Heart right ventricle (tissue), 16 donors: ENCODE measurements at regions of chr5 and their contacts with region 1.

Region 1: GRCh38 chr5:170791325-170791954 is 7.9 kb downstream of the GABRP start:
- DNase-seq: peak; percentile 49 to 76
- ATAC-seq: peak; percentile 74 to 88 (median 83)
- H3K4me3 ChIP-seq: no peak overlapping the region
- H3K27ac ChIP-seq: peak overlapping the region in 5 of 10 donors; percentile 3 to 76 (median 30)
- H3K4me1 ChIP-seq: peaks cover 2 to 46% (median 27%) of the 10 kb centered on the region in 9 donors
- H3K27me3 ChIP-seq: no peaks in the 10 kb centered on the region
- CTCF ChIP-seq: peak; percentile 57 to 82 (median 66)

Region 2: DNA sequence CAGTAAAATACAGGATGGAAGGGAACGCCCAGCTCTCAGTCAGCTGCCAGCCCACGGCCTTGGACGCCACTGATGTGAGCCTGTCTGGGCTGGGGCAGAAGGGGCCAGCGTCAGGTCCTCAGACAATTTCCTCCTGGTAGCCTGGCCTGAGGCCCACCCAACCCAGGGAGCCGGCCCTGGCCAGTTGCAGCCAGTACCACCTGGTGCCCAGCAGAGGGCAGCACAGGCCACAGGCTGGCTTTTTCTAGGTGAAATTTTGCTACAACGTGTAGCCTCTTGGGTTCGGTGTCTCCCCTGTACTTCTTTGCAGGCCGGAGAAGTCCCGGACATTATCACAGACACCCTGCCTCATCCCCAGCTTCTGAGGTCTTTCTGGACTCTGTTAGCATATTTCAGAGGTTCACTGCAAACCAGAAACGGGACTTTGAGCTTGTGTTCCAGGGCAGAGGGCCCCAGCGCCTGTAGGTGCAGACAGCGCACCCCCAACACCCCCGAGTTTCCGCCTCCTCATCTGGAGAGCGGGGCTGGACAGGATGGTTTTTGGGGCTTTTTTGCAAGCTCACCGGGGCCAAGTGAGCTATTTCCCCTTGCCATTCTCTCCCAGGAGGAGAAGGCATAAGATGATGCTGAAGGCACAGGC is 356.4 kb before region 1 on chr5:
- intact Hi-C with region 1: loop called in 1 of 10 experiments (anchors 10 kb)
- DNase-seq: peak; percentile 43 to 70
- ATAC-seq: peak; percentile 77 to 88 (median 87)
- H3K4me3 ChIP-seq: no peak overlapping the region
- H3K27ac ChIP-seq: no peak overlapping the region
- H3K4me1 ChIP-seq: no peaks in the 10 kb centered on the region
- H3K27me3 ChIP-seq: peaks cover 0 to 10% (median 0%) of the 10 kb centered on the region in 7 donors
- CTCF ChIP-seq: peak; percentile 95 to 99 (median 98)

Region 3: GRCh38 chr5:170638454-170639220 is 152.8 kb before region 1 on chr5:
- intact Hi-C with region 1: loop called (anchors 2 to 10 kb)
- DNase-seq: peak; percentile 61 to 69
- ATAC-seq: peak; percentile 46 to 76 (median 64)
- H3K4me3 ChIP-seq: no peak overlapping the region
- H3K27ac ChIP-seq: no peak overlapping the region
- H3K4me1 ChIP-seq: peaks cover 0 to 26% (median 11%) of the 10 kb centered on the region in 9 donors
- H3K27me3 ChIP-seq: no peaks in the 10 kb centered on the region
- CTCF ChIP-seq: peak; percentile 71 to 94 (median 87)

Region 4: DNA sequence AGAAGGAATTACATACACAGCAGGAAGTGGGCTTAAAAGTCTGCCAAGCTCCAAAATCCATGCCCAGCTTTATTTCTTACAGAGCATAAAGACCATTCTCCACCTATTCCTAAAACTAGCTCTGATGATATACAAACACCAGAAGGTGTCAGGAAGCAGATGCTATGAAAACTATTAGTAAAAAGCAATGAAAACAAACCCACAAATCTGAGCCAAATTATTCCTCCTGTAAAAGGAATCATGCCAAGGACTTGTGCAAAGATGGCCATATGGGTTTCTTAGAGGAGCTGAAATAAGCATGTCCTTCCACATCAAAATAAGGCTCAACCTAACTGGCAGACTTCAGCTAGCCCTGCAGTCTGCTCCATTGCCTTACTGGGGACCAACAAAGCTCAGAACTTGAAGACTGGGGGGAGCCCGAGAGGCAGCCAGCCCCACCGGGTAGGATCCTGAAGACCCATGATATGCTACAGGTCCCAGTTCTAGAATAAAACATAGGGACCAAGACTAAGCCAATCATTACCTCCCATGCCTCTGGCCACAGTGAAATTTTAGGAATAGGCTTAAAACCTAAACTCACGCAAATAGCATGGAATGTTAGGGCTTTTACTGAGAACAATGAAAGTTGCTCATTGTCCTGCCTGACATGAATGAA is 50.8 kb before region 1 on chr5:
- intact Hi-C with region 1: loop called in 9 of 10 experiments (anchors 1 to 2 kb)
- DNase-seq: no peak
- ATAC-seq: no peak
- H3K4me3 ChIP-seq: no peak overlapping the region
- H3K27ac ChIP-seq: no peak overlapping the region
- H3K4me1 ChIP-seq: peaks cover 7 to 21% (median 17%) of the 10 kb centered on the region in 9 donors
- H3K27me3 ChIP-seq: peaks cover 0 to 19% (median 0%) of the 10 kb centered on the region in 7 donors
- CTCF ChIP-seq: no peak

Region 5: DNA sequence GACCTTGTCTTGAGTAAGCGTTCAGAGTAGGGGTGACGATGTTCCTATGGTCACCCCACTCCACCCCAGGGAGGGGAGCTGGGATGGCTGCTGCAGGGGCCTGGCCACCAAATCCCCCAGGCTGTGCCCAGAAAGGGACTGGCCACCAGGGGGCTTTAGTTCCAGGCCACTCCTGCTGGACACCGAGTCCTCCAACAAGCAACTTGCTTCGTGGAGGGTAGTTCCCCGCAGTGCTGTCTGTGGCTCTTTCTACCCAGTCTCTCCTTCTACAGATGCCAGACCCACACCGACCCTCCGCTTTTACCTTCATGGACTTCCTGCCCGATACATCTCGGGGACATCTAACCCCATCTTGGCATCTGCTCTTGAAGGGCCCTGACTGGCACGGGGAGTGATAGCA is 43.6 kb before region 1 on chr5:
- intact Hi-C with region 1: loop called (anchors 1 to 2 kb)
- DNase-seq: peak; percentile 25 to 40
- ATAC-seq: peak in 7 of 8 donors; percentile 2 to 47 (median 18)
- H3K4me3 ChIP-seq: no peak overlapping the region
- H3K27ac ChIP-seq: peak overlapping the region; percentile 46 to 92 (median 86)
- H3K4me1 ChIP-seq: peaks cover 18 to 87% (median 71%) of the 10 kb centered on the region in 9 donors
- H3K27me3 ChIP-seq: peaks cover 0 to 21% (median 0%) of the 10 kb centered on the region in 7 donors
- CTCF ChIP-seq: peak in 8 of 9 donors; percentile 23 to 64 (median 52)